GM12878 (cell line): ENCODE measurements at regions of chr3 and their contacts with region 1.

Region 1: GRCh38 chr3:156044634-156044975 is 75.8 kb upstream of the KCNAB1 start:
- DNase-seq: no peak
- ATAC-seq: no peak
- H3K4me3 ChIP-seq: no peak overlapping the region
- H3K27ac ChIP-seq: no peak overlapping the region
- H3K4me1 ChIP-seq: no peaks in the 10 kb centered on the region
- H3K27me3 ChIP-seq: no peaks in the 10 kb centered on the region
- CTCF ChIP-seq: no peak
- EP300 ChIP-seq: no peak
- POLR2A ChIP-seq: no peak
- RAD21 ChIP-seq: no peak

Region 2: DNA sequence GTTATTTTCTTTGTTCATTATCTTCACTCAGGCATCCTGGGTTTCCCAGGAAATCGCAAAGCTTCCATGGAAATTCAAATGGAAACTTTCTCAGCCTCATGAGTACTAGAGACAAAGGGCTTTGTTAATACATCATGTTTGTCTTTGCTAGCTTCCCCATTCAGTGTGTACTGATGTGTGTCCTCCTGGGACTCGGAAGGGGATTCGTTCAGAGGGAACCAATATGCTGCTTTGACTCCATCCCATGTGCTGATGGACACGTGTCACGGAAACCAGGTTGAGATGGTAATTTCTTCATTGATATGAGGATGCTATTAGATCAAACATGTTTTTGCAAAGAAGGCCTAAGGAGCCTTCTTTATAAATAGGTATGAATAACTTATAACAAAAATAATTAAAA is 11.2 kb before region 1 on chr3:
- CTCF ChIA-PET with region 1: interaction called, 21 read pairs
- POLR2A ChIA-PET with region 1: no interaction called
- RAD21 ChIA-PET with region 1: no interaction called
- SMC1A ChIA-PET with region 1: interaction called, 3 read pairs
- in situ Hi-C with region 1: no loop called
- intact Hi-C with region 1: no loop called
- DNase-seq: no peak
- ATAC-seq: no peak
- H3K4me3 ChIP-seq: no peak overlapping the region
- H3K27ac ChIP-seq: no peak overlapping the region
- H3K4me1 ChIP-seq: no peaks in the 10 kb centered on the region
- H3K27me3 ChIP-seq: no peaks in the 10 kb centered on the region; a peak in 1 of 4 replicates
- CTCF ChIP-seq: no peak
- EP300 ChIP-seq: no peak
- POLR2A ChIP-seq: no peak
- RAD21 ChIP-seq: no peak